ENCODE measurements at regions of chr10 and their contacts with region 1.

Region 1: DNA sequence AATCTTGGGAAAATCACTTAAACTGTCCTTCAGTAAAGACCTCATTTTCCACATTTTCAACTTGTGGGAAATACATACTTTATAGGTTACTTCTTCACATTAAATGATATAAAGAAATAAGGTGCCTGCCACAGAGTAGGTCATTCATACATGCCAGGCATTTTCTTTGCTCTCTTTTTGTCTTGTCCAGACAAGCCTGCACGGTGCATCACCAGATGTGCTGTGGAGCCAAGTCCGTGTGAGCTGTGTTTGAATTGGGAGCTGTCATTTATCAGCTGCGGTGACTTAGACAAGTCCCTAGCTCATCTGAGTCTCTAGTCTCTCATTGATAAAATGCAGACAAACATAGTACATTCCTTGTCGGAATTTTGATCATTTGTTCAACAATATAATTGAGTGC is 432.9 kb downstream of the SORCS3 start:
- DNase-seq: no peak

Region 2: GRCh38 chr10:105026566-105026965 is 47.4 kb before region 1 on chr10:
- intact Hi-C with region 1: loop called in 1 of 2 experiments (anchors 1 kb)
- DNase-seq: no peak

Region 3: DNA sequence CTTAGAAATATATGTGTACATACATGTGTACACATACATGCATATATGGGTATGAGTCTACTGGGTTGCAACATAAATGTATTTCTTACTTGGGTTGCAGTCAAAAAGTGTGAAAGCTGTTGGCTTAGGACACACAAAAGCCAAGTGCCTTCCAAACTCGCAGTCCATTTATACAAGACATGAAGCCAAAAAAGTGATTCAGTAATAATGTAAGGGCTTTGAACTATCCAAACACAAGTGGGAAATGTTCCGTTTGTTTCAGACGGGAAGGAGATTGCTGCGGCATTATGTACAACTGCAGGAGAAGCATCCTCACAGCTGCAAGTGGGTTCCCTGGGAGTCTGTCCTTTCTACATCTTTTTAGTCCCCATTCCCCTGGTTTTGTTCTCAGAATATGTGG is 80.7 kb after region 1 on chr10:
- intact Hi-C with region 1: no loop called
- DNase-seq: no peak

Region 4: GRCh38 chr10:105950410-105950809 is 876.4 kb after region 1 on chr10:
- intact Hi-C with region 1: no loop called
- DNase-seq: no peak

Measured in posterior vena cava (tissue), 2 donors.